ENCODE measurements at regions of chr11 and their contacts with region 1.

Region 1: GRCh38 chr11:38169012-38169684 is 1571.1 kb upstream of the RAG2 start:
- DNase-seq: peak; percentile 5 to 88
- H3K4me3 ChIP-seq: no peak overlapping the region
- H3K27ac ChIP-seq: peak overlapping the region; percentile 51
- H3K4me1 ChIP-seq: peaks cover 22% of the 10 kb centered on the region
- H3K27me3 ChIP-seq: no peaks in the 10 kb centered on the region
- CTCF ChIP-seq: no peak

Region 2: DNA sequence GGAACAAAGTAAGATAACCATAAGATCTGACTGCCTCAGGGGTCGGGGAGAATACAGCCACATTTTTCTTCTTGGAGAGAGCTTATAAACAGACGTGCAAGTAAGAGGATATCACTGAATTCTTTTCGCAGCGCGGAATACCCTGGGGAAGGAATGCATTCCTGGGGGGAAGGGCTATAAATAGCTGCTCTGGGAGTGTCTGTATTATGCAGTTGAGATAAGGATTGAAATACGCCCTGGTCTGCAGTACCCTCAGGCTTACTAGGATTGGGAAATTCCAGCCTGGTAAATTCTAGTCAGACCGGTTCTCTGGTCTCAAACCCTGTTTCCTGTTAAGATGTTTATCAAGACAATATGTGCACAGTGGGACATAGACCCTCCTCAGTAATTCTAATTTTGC is 79.4 kb before region 1 on chr11:
- CTCF ChIA-PET with region 1: no interaction called
- POLR2A ChIA-PET with region 1: no interaction called
- intact Hi-C with region 1: loop called (anchors 1 kb)
- DNase-seq: peak; percentile 88 to 99
- H3K4me3 ChIP-seq: no peak overlapping the region
- H3K27ac ChIP-seq: peak overlapping the region; percentile 70
- H3K4me1 ChIP-seq: peaks cover 27% of the 10 kb centered on the region
- H3K27me3 ChIP-seq: no peaks in the 10 kb centered on the region
- CTCF ChIP-seq: no peak

Measured in PC-9 (cell line).